ENCODE measurements at regions of chr3 and their contacts with region 1.

Region 1: DNA sequence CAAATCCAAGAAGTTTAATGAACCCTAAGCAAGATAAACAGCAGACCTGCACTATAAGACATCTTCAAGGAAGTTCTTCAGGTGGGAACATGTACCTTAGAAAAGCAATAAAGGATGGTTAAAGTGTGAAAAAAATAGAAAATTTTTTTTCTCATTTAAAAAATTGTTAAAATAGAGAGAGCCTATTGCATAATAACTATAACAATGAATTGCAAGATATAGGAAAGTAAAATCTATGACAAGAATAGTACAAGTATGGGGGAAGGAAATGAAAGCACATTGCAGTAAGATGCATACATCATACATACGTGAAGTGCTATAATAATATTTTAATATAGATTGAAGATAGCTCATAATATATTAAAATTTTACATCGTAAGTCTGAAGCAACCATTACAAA is 310.1 kb upstream of the KCNMB2 start:
- DNase-seq: no peak

Region 2: DNA sequence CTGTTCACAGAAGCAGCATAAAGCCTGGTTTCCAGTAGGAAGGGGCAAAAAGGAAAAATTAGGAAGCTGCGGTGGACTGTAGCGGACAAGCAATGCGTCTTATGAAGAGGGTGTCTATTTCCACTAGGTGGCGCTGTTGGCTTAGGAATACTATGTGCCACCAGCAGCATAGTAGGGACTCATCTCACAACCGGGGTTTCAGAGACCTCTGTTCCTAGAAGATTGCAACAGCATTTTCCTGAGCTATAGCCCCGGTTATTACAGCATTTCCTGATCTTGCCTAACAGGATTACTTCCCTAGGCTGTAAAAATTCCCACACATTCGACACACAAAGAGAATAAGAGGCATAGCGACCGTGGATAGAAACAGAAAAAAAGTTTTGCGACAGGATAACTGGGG is 1711.8 kb before region 1 on chr3:
- intact Hi-C with region 1: loop called in 1 of 2 experiments (anchors 5 kb)
- DNase-seq: no peak

Measured in posterior vena cava (tissue), 2 donors.